Activated CD4-positive, alpha-beta memory T cell treated with anti-CD3 and anti-CD28 coated beads, Interleukin-2, amount 10 ng/mL, durations not matched to agents 7 days and 5 days (primary cell): ENCODE measurements at regions of chrX and their contacts with region 1.

Region 1: DNA sequence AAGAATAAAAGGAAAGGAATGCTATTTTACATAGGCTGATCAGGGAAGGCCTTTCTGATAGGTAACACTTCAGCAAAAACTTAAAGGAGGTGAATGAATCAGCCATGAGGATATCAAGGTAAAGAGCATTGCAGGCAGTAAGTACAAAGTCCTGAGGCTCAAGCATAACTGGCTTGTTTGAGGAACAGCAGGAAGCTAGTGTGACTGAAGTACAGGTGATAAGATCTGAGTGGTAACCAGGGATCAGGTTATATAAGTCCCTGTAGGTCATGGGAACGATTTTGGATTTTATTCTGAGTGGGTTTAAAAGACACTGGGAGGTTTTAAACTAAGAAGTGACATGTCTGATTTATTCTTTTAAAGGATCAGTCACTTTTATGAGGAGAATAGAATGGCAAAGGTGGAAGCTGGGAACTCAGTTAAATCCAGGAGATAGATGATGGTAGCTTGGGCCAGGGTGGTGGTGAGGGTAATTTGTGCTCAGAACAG is 47.1 kb upstream of the THOC2 start:
- DNase-seq: no peak
- H3K4me3 Mint-ChIP-seq: no peak overlapping the region
- H3K27ac Mint-ChIP-seq: no peak overlapping the region
- H3K4me1 Mint-ChIP-seq: peaks cover 2% of the 10 kb centered on the region
- H3K27me3 Mint-ChIP-seq: no peaks in the 10 kb centered on the region

Region 2: GRCh38 chrX:123764967-123765871 is 14.7 kb before region 1 on chrX:
- CTCF ChIA-PET with region 1: interaction called, 25 read pairs
- POLR2A ChIA-PET with region 1: interaction called, 6 read pairs
- DNase-seq: peak; percentile 55
- H3K4me3 Mint-ChIP-seq: peak overlapping the region; percentile 75
- H3K27ac Mint-ChIP-seq: peak overlapping the region; percentile 48
- H3K4me1 Mint-ChIP-seq: peaks cover 10% of the 10 kb centered on the region
- H3K27me3 Mint-ChIP-seq: peaks cover 2% of the 10 kb centered on the region